Heart right ventricle (tissue), 16 donors: ENCODE measurements at regions of chr14 and their contacts with region 1.

Region 1: DNA sequence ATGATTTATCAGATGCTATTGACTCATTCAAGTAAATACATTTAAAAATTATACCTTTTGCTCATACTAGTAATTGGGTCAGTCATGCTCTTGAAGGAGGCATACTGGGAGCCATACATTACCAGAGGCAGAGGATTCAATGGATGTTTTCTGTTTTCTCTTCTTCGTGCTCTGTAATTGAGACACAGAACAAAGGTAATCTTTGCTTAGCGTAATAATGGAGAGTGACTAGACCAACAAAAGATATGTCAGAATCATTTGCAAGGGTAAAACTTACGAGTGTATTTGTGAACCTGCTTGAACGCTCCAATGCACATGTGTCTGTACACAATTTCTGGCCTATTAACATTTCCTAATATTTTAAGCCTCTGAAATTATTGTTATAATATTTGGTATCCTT is 296.4 kb downstream of the FOXG1 start:
- DNase-seq: no peak
- ATAC-seq: no peak
- H3K4me3 ChIP-seq: no peak overlapping the region
- H3K27ac ChIP-seq: no peak overlapping the region
- H3K4me1 ChIP-seq: no peaks in the 10 kb centered on the region
- H3K27me3 ChIP-seq: no peaks in the 10 kb centered on the region
- CTCF ChIP-seq: no peak

Region 2: GRCh38 chr14:28831126-28831525 is 231.8 kb before region 1 on chr14:
- intact Hi-C with region 1: no loop called
- DNase-seq: no peak
- ATAC-seq: no peak
- H3K4me3 ChIP-seq: no peak overlapping the region
- H3K27ac ChIP-seq: no peak overlapping the region
- H3K4me1 ChIP-seq: no peaks in the 10 kb centered on the region
- H3K27me3 ChIP-seq: no peaks in the 10 kb centered on the region
- CTCF ChIP-seq: no peak

Region 3: GRCh38 chr14:29007990-29008389 is 55.0 kb before region 1 on chr14:
- intact Hi-C with region 1: no loop called
- DNase-seq: no peak
- ATAC-seq: no peak
- H3K4me3 ChIP-seq: no peak overlapping the region
- H3K27ac ChIP-seq: no peak overlapping the region
- H3K4me1 ChIP-seq: no peaks in the 10 kb centered on the region
- H3K27me3 ChIP-seq: no peaks in the 10 kb centered on the region
- CTCF ChIP-seq: no peak

Region 4: DNA sequence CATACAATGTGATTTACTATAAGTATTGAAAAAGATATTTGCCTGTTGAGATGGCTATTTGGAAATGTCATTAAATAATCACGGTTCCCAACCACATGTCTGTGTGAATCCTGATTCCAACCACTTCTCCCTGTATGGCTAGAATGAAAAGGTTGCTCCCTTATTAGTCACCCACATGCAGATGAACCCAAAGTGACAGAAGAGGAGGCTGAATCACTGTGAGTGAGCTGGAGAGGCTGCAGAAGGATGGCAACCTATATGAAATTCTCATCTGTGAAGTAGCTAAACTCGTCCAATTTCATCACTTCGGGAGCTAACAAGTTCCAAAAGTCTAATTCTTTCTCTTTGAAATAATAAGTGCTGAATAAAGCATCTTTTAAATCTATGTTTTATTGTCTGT is 564.2 kb after region 1 on chr14:
- intact Hi-C with region 1: no loop called
- DNase-seq: no peak
- ATAC-seq: no peak
- H3K4me3 ChIP-seq: no peak overlapping the region
- H3K27ac ChIP-seq: no peak overlapping the region
- H3K4me1 ChIP-seq: no peaks in the 10 kb centered on the region
- H3K27me3 ChIP-seq: no peaks in the 10 kb centered on the region
- CTCF ChIP-seq: no peak

Region 5: GRCh38 chr14:30874120-30874998 is 1811.4 kb after region 1 on chr14 and contains the start of gene COCH:
- intact Hi-C with region 1: loop called in 1 of 10 experiments (anchors 10 kb)
- DNase-seq: peak; percentile 17 to 36
- ATAC-seq: peak; percentile 50 to 82 (median 73)
- H3K4me3 ChIP-seq: peak within 1 kb of the TSS; percentile 44 to 83 (median 64)
- H3K27ac ChIP-seq: no peak within 1 kb of the TSS
- H3K4me1 ChIP-seq: peaks cover 11 to 21% (median 16%) of the 10 kb centered on the region in 9 donors
- H3K27me3 ChIP-seq: peaks cover 9 to 70% (median 56%) of the 10 kb centered on the region in 7 donors
- CTCF ChIP-seq: peak in 7 of 9 donors; percentile 7 to 53 (median 37)
- total RNA-seq, gene COCH: 0.13 to 2.9 (median 0.97) TPM